HepG2 (cell line): ENCODE measurements at regions of chr6 and their contacts with region 1.

Region 1: GRCh38 chr6:121055572-121056163 is 278.6 kb downstream of the TBC1D32 start:
- DNase-seq: peak; percentile 54
- ATAC-seq: peak; percentile 97
- H3K4me3 ChIP-seq: no peak overlapping the region
- H3K27ac ChIP-seq: no peak overlapping the region
- H3K4me1 ChIP-seq: no peaks in the 10 kb centered on the region
- H3K27me3 ChIP-seq: no peaks in the 10 kb centered on the region
- CTCF ChIP-seq: peak; percentile 81
- EP300 ChIP-seq: no peak
- POLR2A ChIP-seq: no peak
- RAD21 ChIP-seq: peak; percentile 65

Region 2: GRCh38 chr6:121067381-121067780 is 11.7 kb after region 1 on chr6:
- CTCF ChIA-PET with region 1: no interaction called
- POLR2A ChIA-PET with region 1: no interaction called
- in situ Hi-C with region 1: no loop called
- intact Hi-C with region 1: no loop called
- DNase-seq: no peak
- ATAC-seq: no peak
- H3K4me3 ChIP-seq: no peak overlapping the region
- H3K27ac ChIP-seq: no peak overlapping the region
- H3K4me1 ChIP-seq: no peaks in the 10 kb centered on the region
- H3K27me3 ChIP-seq: no peaks in the 10 kb centered on the region
- CTCF ChIP-seq: no peak
- EP300 ChIP-seq: no peak
- POLR2A ChIP-seq: no peak
- RAD21 ChIP-seq: no peak

Region 3: DNA sequence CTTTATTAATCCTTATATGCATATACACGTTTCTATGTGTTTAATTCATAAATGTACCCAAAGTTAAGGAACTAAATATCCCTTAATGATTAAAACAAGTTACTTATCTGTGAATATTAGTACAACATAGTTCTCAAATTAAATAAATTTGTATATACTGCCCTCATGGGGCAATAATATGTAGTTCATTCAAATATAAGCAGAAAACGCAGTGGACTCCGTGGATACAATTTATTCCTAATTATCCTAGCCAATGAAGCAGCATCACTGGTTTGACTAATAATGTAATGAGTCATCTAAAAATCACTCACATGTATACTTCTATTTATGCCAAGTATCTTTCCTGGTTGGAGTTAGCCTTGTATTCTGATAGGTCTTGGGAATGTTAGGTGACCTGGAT is 167.0 kb after region 1 on chr6:
- CTCF ChIA-PET with region 1: interaction called, 4 read pairs
- POLR2A ChIA-PET with region 1: no interaction called
- in situ Hi-C with region 1: loop called (anchors 10 kb)
- intact Hi-C with region 1: loop called (anchors 2 kb)
- DNase-seq: no peak
- ATAC-seq: no peak
- H3K4me3 ChIP-seq: no peak overlapping the region
- H3K27ac ChIP-seq: no peak overlapping the region
- H3K4me1 ChIP-seq: no peaks in the 10 kb centered on the region
- H3K27me3 ChIP-seq: no peaks in the 10 kb centered on the region
- CTCF ChIP-seq: no peak
- EP300 ChIP-seq: no peak
- POLR2A ChIP-seq: no peak
- RAD21 ChIP-seq: no peak

Region 4: GRCh38 chr6:121305957-121306607 is 250.4 kb after region 1 on chr6:
- CTCF ChIA-PET with region 1: interaction called, 25 read pairs
- POLR2A ChIA-PET with region 1: no interaction called
- in situ Hi-C with region 1: loop called (anchors 5 kb)
- intact Hi-C with region 1: loop called (anchors 1 kb)
- DNase-seq: peak; percentile 59
- ATAC-seq: peak; percentile 95
- H3K4me3 ChIP-seq: no peak overlapping the region
- H3K27ac ChIP-seq: no peak overlapping the region
- H3K4me1 ChIP-seq: no peaks in the 10 kb centered on the region
- H3K27me3 ChIP-seq: no peaks in the 10 kb centered on the region
- CTCF ChIP-seq: peak; percentile 77
- EP300 ChIP-seq: no peak
- POLR2A ChIP-seq: no peak
- RAD21 ChIP-seq: peak; percentile 61; the same call in 1 of the 2 replicates

Region 5: GRCh38 chr6:121399966-121400365 is 344.3 kb after region 1 on chr6:
- CTCF ChIA-PET with region 1: interaction called, 3 read pairs
- POLR2A ChIA-PET with region 1: no interaction called
- in situ Hi-C with region 1: no loop called
- intact Hi-C with region 1: loop called (anchors 2 kb)
- DNase-seq: no peak
- ATAC-seq: no peak; the same call in 1 of the 3 replicates
- H3K4me3 ChIP-seq: no peak overlapping the region
- H3K27ac ChIP-seq: no peak overlapping the region
- H3K4me1 ChIP-seq: no peaks in the 10 kb centered on the region
- H3K27me3 ChIP-seq: peaks cover 0 to 9% of the 10 kb centered on the region in 2 experiments; a peak in 1 of 5 replicates
- CTCF ChIP-seq: no peak
- EP300 ChIP-seq: no peak
- POLR2A ChIP-seq: no peak
- RAD21 ChIP-seq: no peak

Region 6: GRCh38 chr6:121849477-121849876 is 793.8 kb after region 1 on chr6:
- CTCF ChIA-PET with region 1: interaction called, 3 read pairs
- POLR2A ChIA-PET with region 1: no interaction called
- in situ Hi-C with region 1: no loop called
- intact Hi-C with region 1: loop called (anchors 1 kb)
- DNase-seq: peak; percentile 67
- ATAC-seq: peak; percentile 100
- H3K4me3 ChIP-seq: no peak overlapping the region
- H3K27ac ChIP-seq: no peak overlapping the region
- H3K4me1 ChIP-seq: no peaks in the 10 kb centered on the region
- H3K27me3 ChIP-seq: no peaks in the 10 kb centered on the region
- CTCF ChIP-seq: peak; percentile 86
- EP300 ChIP-seq: no peak
- POLR2A ChIP-seq: no peak
- RAD21 ChIP-seq: peak; percentile 62

Region 7: DNA sequence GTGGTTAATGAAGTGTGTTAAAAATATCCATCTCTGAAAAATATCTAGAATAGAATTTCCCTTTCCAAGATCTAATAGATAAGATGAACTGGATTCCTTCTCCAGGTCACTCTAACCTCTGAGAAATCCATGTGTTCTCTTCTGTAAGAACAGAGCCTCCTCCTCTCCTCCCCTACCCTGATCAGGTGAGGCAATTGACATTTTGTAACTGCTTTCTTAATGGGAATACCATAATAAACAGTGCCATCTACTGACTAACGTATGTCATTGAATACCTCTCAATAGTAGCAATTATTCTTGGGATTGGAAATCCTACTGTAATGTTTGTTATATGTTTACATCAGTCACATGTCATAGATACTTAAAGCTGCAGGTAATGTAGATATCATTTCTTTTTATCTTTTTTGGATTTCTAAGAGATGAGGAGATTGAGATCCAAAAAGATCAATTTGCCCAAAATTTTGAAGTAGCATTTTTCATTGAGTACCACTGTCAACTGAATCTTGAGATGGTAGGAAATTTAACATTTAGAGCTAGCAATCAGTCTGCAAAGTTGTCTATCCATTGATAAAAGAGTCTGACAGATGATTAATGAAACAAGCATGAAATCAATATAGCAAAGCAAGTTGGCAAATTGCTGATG is 978.0 kb after region 1 on chr6:
- CTCF ChIA-PET with region 1: interaction called, 6 read pairs
- POLR2A ChIA-PET with region 1: no interaction called
- in situ Hi-C with region 1: no loop called
- intact Hi-C with region 1: loop called (anchors 5 kb)
- DNase-seq: peak; percentile 55
- ATAC-seq: peak; percentile 96
- H3K4me3 ChIP-seq: no peak overlapping the region
- H3K27ac ChIP-seq: no peak overlapping the region
- H3K4me1 ChIP-seq: no peaks in the 10 kb centered on the region
- H3K27me3 ChIP-seq: no peaks in the 10 kb centered on the region
- CTCF ChIP-seq: peak; percentile 77
- EP300 ChIP-seq: no peak
- POLR2A ChIP-seq: no peak
- RAD21 ChIP-seq: peak; percentile 51; the same call in 1 of the 2 replicates